Endothelial cell of umbilical vein (primary cell): ENCODE measurements at regions of chr3 and their contacts with region 1.

Region 1: GRCh38 chr3:136752422-136753325 is 496 bp upstream of the STAG1 start:
- DNase-seq: peak; percentile 99
- H3K4me3 ChIP-seq: peak overlapping the region; percentile 80 to 82 (median 82)
- H3K27ac ChIP-seq: peak overlapping the region; percentile 99
- H3K4me1 ChIP-seq: peaks cover 19% of the 10 kb centered on the region
- H3K27me3 ChIP-seq: no peaks in the 10 kb centered on the region
- CTCF ChIP-seq: peak in 1 of 2 donors; percentile 96
- POLR2A ChIP-seq: peak; percentile 84

Region 2: DNA sequence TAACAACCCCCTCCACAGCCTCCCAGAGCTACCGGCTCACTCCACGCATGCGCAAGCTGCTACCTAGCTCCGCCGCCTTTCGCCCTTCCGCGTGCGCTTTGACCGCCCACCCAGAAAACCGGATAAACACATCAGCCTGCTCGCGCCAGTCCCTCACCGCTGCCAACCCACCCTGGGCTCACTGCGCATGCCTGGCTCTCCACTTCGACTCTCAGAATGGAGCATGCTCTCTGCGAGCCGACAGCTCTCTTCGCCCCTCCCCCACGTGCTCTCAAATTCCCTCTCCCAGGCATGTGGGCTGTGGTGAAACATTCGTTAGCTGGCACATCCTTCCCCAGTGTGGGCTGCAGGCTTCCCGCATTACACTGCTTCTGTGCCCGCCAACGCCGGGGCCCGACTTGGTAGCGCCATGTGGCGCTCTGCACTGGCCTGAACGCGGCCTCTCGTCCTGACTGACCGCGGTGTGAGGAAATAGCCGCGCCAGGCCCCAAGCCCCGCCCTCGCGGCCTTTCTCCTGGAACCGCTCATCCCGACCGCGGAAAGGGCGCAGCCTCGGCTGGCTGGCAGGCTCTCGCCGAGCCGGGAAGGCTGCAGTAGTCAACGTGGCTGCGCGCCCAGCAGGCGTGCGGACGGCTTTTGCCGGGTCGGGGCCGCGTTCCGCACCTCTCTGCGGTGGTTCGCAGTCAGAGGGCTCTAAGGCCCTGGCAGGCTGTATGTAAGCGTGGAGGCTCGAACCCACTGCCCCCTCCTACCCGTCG is 556.1 kb before region 1 on chr3:
- CTCF ChIA-PET with region 1: interaction called, 36 read pairs
- POLR2A ChIA-PET with region 1: interaction called, 11 read pairs
- dilution Hi-C with region 1: no loop called
- intact Hi-C with region 1: loop called (anchors 1 kb)
- DNase-seq: peak; percentile 100
- H3K4me3 ChIP-seq: peak overlapping the region; percentile 36 to 76 (median 48)
- H3K27ac ChIP-seq: peak overlapping the region; percentile 93
- H3K4me1 ChIP-seq: peaks cover 14% of the 10 kb centered on the region
- H3K27me3 ChIP-seq: no peaks in the 10 kb centered on the region
- CTCF ChIP-seq: no peak
- POLR2A ChIP-seq: peak; percentile 79

Region 3: GRCh38 chr3:136332776-136333175 is 419.9 kb before region 1 on chr3:
- CTCF ChIA-PET with region 1: interaction called, 21 read pairs
- POLR2A ChIA-PET with region 1: interaction called, 3 read pairs
- dilution Hi-C with region 1: no loop called
- intact Hi-C with region 1: no loop called
- DNase-seq: no peak
- H3K4me3 ChIP-seq: no peak overlapping the region
- H3K27ac ChIP-seq: no peak overlapping the region
- H3K4me1 ChIP-seq: no peaks in the 10 kb centered on the region
- H3K27me3 ChIP-seq: no peaks in the 10 kb centered on the region
- CTCF ChIP-seq: no peak
- POLR2A ChIP-seq: no peak

Region 4: DNA sequence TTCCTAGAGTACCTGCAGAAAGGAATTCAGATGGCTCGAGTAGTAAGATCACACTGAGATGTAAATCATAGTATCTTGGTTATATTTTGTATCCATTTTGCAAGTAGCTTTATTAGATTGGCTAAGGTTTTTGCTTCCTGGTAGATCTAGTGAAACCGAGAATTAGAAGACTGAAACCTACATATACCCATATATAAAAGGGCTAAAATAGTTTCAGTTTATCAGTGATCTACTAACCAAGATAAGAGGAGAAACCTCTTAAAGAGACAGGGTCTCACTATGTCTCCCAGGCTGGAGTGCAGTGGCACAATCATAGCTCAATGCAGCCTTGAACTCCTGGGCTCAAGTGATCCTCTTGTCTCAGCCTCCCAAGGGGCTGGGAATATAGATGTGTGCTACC is 367.2 kb before region 1 on chr3:
- CTCF ChIA-PET with region 1: interaction called, 253 read pairs
- POLR2A ChIA-PET with region 1: interaction called, 17 read pairs
- dilution Hi-C with region 1: no loop called
- intact Hi-C with region 1: no loop called
- DNase-seq: no peak
- H3K4me3 ChIP-seq: no peak overlapping the region
- H3K27ac ChIP-seq: no peak overlapping the region
- H3K4me1 ChIP-seq: peaks cover 3% of the 10 kb centered on the region
- H3K27me3 ChIP-seq: no peaks in the 10 kb centered on the region
- CTCF ChIP-seq: no peak
- POLR2A ChIP-seq: no peak

Region 5: DNA sequence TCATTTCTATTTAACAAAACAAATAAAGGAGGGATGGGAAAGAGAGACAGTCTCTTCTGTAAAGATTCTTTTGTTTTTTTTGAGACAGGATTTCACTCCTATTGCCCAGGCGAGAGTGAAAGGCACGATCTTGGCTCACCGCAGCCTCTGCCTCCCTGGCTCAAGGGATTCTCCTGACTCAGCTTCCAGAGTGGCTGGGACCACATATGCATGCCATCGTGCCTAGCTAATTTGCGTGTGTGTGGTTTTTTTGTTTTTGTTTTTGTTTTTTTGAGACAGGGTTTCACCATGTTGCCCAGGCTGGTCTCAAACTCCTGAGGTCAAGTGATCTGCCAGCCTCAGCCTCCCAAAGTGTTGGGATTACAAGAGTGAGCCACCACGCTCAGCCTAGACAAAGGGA is 23.8 kb before region 1 on chr3:
- CTCF ChIA-PET with region 1: interaction called, 16 read pairs
- POLR2A ChIA-PET with region 1: no interaction called
- dilution Hi-C with region 1: no loop called
- intact Hi-C with region 1: no loop called
- DNase-seq: no peak
- H3K4me3 ChIP-seq: no peak overlapping the region
- H3K27ac ChIP-seq: no peak overlapping the region
- H3K4me1 ChIP-seq: peaks cover 3% of the 10 kb centered on the region
- H3K27me3 ChIP-seq: no peaks in the 10 kb centered on the region
- CTCF ChIP-seq: no peak
- POLR2A ChIP-seq: no peak

Region 6: DNA sequence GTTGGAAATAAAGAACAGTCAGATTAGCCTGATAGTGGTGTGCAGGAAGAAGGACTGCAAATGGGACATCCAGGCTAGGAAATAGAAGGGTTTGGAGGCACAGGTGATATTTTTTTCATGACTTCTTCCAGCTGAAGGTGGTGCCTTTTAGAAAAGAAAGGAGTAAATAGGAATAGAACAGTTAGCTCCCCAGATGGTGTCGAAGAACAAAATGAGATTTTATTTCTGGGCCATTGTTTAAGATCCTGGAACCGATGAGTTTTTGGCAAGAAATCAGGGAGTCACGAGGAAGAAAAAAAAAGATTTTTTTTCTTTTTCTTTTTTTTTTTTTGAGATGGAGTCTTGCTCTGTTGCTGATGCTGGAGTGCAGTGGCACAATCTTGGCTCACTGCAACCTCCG is 99.5 kb after region 1 on chr3:
- CTCF ChIA-PET with region 1: interaction called, 11 read pairs
- POLR2A ChIA-PET with region 1: no interaction called
- dilution Hi-C with region 1: no loop called
- intact Hi-C with region 1: no loop called
- DNase-seq: no peak
- H3K4me3 ChIP-seq: no peak overlapping the region
- H3K27ac ChIP-seq: peak overlapping the region; percentile 14
- H3K4me1 ChIP-seq: no peaks in the 10 kb centered on the region
- H3K27me3 ChIP-seq: no peaks in the 10 kb centered on the region
- CTCF ChIP-seq: no peak
- POLR2A ChIP-seq: no peak

Region 7: GRCh38 chr3:137032465-137033120 is 279.9 kb after region 1 on chr3:
- CTCF ChIA-PET with region 1: interaction called, 10 read pairs
- POLR2A ChIA-PET with region 1: no interaction called
- dilution Hi-C with region 1: no loop called
- intact Hi-C with region 1: no loop called
- DNase-seq: peak; percentile 86
- H3K4me3 ChIP-seq: peak overlapping the region; percentile 23 to 61 (median 26)
- H3K27ac ChIP-seq: no peak overlapping the region
- H3K4me1 ChIP-seq: peaks cover 10% of the 10 kb centered on the region
- H3K27me3 ChIP-seq: peaks cover 10 to 12% of the 10 kb centered on the region in 2 experiments
- CTCF ChIP-seq: peak; percentile 93 to 94
- POLR2A ChIP-seq: no peak